ENCODE measurements at regions of chr15 and their contacts with region 1.

Region 1: DNA sequence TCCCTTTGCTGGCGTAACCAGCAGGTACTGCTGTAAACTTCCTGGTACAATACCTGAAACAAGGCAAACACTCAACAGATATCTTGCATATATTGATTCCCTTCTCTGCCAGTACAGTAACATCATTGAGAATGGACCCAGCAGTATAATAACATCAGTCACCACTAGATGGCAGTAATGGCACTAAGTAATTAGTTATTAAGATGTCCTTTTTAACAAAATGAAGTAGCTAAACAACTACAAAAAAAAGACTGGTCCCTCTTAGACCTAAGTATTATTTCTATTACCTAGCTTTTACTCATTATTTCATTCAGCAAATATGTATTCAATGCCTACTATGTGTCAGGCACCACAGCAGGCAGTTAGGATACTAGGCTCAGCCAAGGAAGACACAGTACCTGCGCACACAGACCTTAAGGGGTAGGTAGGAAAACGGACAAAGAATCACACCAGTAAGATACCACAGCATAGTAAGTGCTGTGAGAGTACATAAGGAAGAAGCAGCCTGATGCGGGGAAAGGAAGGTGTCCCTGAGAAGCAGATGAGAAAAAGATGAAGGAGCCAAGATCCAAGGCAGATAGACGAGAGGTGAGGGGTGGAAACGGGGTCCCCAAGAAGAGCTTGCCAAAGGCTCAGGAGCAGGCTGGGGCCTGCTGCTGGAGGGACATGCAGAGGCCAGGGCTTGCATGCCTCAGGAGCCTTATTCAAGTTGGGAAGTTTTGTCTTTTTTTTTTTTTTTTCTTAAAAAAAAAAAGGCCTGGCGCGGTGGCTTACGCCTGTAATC is 102.8 kb upstream of the CHD2 start:
- DNase-seq: peak in 5 of 14 experiments; percentile 26 to 89 (median 83)
- ATAC-seq: peak; percentile 95
- H3K4me3 ChIP-seq: no peak overlapping the region
- H3K4me3 Mint-ChIP-seq: no peak overlapping the region
- H3K27ac ChIP-seq: no peak overlapping the region
- H3K27ac Mint-ChIP-seq: peak overlapping the region; percentile 31
- H3K4me1 ChIP-seq: peaks cover 10% of the 10 kb centered on the region
- H3K4me1 Mint-ChIP-seq: peaks cover 10% of the 10 kb centered on the region
- H3K27me3 ChIP-seq: no peaks in the 10 kb centered on the region
- H3K27me3 Mint-ChIP-seq: no peaks in the 10 kb centered on the region
- CTCF ChIP-seq: peak; percentile 73

Region 2: GRCh38 chr15:92845126-92845508 is 47.8 kb after region 1 on chr15:
- CTCF ChIA-PET with region 1: no interaction called
- POLR2A ChIA-PET with region 1: no interaction called
- intact Hi-C with region 1: no loop called
- DNase-seq: peak in 3 of 14 experiments; percentile 76 to 84 (median 81)
- ATAC-seq: peak; percentile 46
- H3K4me3 ChIP-seq: peak overlapping the region; percentile 31
- H3K4me3 Mint-ChIP-seq: peak overlapping the region; percentile 88
- H3K27ac ChIP-seq: peak overlapping the region; percentile 37 to 75
- H3K27ac Mint-ChIP-seq: peak overlapping the region; percentile 91
- H3K4me1 ChIP-seq: peaks cover 79% of the 10 kb centered on the region
- H3K4me1 Mint-ChIP-seq: peaks cover 63% of the 10 kb centered on the region
- H3K27me3 ChIP-seq: no peaks in the 10 kb centered on the region
- H3K27me3 Mint-ChIP-seq: no peaks in the 10 kb centered on the region
- CTCF ChIP-seq: no peak

Region 3: DNA sequence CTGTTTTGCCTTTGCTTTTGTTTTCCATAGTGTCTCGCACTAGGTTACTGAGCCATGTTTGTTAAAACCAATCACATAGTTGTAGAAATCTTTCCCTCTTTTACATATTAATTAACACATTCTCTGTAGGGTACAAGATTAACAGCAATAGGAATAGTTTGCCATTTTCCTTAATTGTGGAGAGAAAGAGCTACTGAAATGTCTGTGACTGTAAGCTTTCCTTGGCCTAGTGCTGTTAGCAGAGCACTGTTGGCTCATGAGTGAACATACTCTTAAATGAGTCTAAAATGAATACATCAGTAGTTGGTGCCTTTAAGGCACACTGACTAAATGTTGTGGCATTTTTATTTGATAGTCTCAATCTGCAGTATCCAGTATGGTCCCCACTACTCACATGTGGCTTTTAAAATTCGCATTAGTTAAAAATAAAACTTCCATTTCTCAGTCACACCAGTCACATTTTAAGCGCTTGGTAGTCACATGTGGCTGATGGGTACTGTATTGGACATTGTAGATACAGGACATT is 130.9 kb after region 1 on chr15:
- CTCF ChIA-PET with region 1: interaction called, 10 read pairs
- POLR2A ChIA-PET with region 1: interaction called, 5 read pairs
- intact Hi-C with region 1: no loop called
- DNase-seq: no peak
- ATAC-seq: no peak
- H3K4me3 ChIP-seq: no peak overlapping the region
- H3K4me3 Mint-ChIP-seq: no peak overlapping the region
- H3K27ac ChIP-seq: no peak overlapping the region
- H3K27ac Mint-ChIP-seq: peak overlapping the region; percentile 57
- H3K4me1 ChIP-seq: peaks cover 21% of the 10 kb centered on the region
- H3K4me1 Mint-ChIP-seq: peaks cover 79% of the 10 kb centered on the region
- H3K27me3 ChIP-seq: no peaks in the 10 kb centered on the region
- H3K27me3 Mint-ChIP-seq: no peaks in the 10 kb centered on the region
- CTCF ChIP-seq: no peak

Region 4: GRCh38 chr15:92992720-92993119 is 195.4 kb after region 1 on chr15:
- CTCF ChIA-PET with region 1: interaction called, 4 read pairs
- POLR2A ChIA-PET with region 1: no interaction called
- intact Hi-C with region 1: loop called in 1 of 2 experiments (anchors 10 kb)
- DNase-seq: no peak
- ATAC-seq: no peak
- H3K4me3 ChIP-seq: no peak overlapping the region
- H3K4me3 Mint-ChIP-seq: no peak overlapping the region
- H3K27ac ChIP-seq: no peak overlapping the region
- H3K27ac Mint-ChIP-seq: peak overlapping the region; percentile 60
- H3K4me1 ChIP-seq: peaks cover 4% of the 10 kb centered on the region
- H3K4me1 Mint-ChIP-seq: peaks cover 60% of the 10 kb centered on the region
- H3K27me3 ChIP-seq: no peaks in the 10 kb centered on the region
- H3K27me3 Mint-ChIP-seq: no peaks in the 10 kb centered on the region
- CTCF ChIP-seq: no peak

Region 5: DNA sequence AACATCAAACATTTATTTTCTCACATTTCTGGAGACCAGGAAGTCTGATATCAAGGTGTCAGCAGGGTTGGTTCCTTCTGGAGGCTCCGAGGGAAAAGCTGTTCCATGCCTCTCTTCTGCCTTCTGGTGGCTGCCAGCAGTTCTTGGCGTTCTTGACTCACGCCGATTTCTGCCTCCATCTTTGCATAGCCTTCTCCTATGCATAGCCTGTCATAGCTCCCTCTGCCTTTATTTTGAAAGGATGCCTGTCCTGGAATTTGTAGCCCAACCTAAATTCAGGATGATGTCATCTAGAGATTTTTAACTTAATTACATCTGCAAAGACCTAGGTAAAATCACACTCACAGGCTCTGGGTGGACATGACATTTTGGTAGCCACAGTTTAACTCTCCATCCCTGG is 221.2 kb after region 1 on chr15:
- CTCF ChIA-PET with region 1: no interaction called
- POLR2A ChIA-PET with region 1: no interaction called
- intact Hi-C with region 1: loop called in 1 of 2 experiments (anchors 5 kb)
- DNase-seq: no peak
- ATAC-seq: no peak
- H3K4me3 ChIP-seq: no peak overlapping the region
- H3K4me3 Mint-ChIP-seq: no peak overlapping the region
- H3K27ac ChIP-seq: no peak overlapping the region
- H3K27ac Mint-ChIP-seq: peak overlapping the region; percentile 64
- H3K4me1 ChIP-seq: peaks cover 3% of the 10 kb centered on the region
- H3K4me1 Mint-ChIP-seq: peaks cover 59% of the 10 kb centered on the region
- H3K27me3 ChIP-seq: no peaks in the 10 kb centered on the region
- H3K27me3 Mint-ChIP-seq: no peaks in the 10 kb centered on the region
- CTCF ChIP-seq: no peak

Measured in CD4-positive, alpha-beta T cell (primary cell).